Psoas muscle (tissue), 8 donors: ENCODE measurements at regions of chr2 and their contacts with region 1.

Region 1: GRCh38 chr2:212520340-212520739 is 18.3 kb downstream of the ERBB4 start:
- DNase-seq: no peak
- ATAC-seq: peak in 1 of 4 donors; percentile 69
- H3K4me3 ChIP-seq: no peak overlapping the region
- H3K27ac ChIP-seq: no peak overlapping the region
- H3K4me1 ChIP-seq: peaks cover 5% of the 10 kb centered on the region
- H3K27me3 ChIP-seq: no peaks in the 10 kb centered on the region
- CTCF ChIP-seq: peak; percentile 30

Region 2: DNA sequence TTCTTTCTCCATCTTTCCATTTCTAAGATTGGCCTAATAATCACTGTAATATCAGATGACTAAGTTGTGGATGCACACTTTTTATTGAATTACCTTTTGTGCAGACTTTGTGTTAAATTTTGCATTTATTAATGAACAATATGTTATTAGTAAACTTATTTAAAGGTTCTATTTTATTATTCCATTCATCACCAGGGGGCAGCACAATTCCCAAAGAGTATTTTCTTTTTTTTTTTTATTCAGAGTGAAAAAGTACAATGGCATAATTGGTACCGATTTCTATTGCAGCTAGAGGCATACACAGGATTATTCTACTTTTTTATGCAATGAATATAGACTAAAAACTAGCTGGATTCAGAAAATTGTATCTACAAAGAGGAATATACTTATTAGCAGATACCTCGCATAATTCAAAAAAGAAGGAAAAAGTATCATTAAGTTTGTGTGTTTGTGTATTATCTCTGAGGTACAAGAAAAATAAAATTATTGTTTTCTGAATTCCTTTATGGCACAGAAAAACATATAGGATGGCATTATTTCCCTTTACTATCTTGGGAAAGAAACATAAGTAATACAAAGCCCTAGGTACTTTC is 372.3 kb before region 1 on chr2:
- intact Hi-C with region 1: loop called in 1 of 2 experiments (anchors 5 kb)
- DNase-seq: no peak
- ATAC-seq: no peak
- H3K4me3 ChIP-seq: no peak overlapping the region
- H3K27ac ChIP-seq: no peak overlapping the region
- H3K4me1 ChIP-seq: no peaks in the 10 kb centered on the region
- H3K27me3 ChIP-seq: no peaks in the 10 kb centered on the region
- CTCF ChIP-seq: peak; percentile 38

Region 3: GRCh38 chr2:214286011-214286410 is 1765.7 kb after region 1 on chr2:
- intact Hi-C with region 1: no loop called
- DNase-seq: no peak
- ATAC-seq: no peak
- H3K4me3 ChIP-seq: no peak overlapping the region
- H3K27ac ChIP-seq: no peak overlapping the region
- H3K4me1 ChIP-seq: no peaks in the 10 kb centered on the region
- H3K27me3 ChIP-seq: no peaks in the 10 kb centered on the region
- CTCF ChIP-seq: no peak